H1 (cell line): ENCODE measurements at regions of chr10 and their contacts with region 1.

Region 1: GRCh38 chr10:131885391-131886161 is 15.2 kb upstream of the PPP2R2D start:
- DNase-seq: peak; percentile 51 to 94
- H3K4me3 ChIP-seq: no peak overlapping the region
- H3K27ac ChIP-seq: no peak overlapping the region
- H3K4me1 ChIP-seq: no peaks in the 10 kb centered on the region
- H3K27me3 ChIP-seq: 0 out of 7 replicates have a peak, but pooled peaks cover 0 to 2% (median 0%) of the 10 kb centered on the region in 4 experiments
- CTCF ChIP-seq: peak; percentile 94 to 98 (median 98)
- EP300 ChIP-seq: no peak
- POLR2A ChIP-seq: no peak
- RAD21 ChIP-seq: peak; percentile 79 to 87

Region 2: DNA sequence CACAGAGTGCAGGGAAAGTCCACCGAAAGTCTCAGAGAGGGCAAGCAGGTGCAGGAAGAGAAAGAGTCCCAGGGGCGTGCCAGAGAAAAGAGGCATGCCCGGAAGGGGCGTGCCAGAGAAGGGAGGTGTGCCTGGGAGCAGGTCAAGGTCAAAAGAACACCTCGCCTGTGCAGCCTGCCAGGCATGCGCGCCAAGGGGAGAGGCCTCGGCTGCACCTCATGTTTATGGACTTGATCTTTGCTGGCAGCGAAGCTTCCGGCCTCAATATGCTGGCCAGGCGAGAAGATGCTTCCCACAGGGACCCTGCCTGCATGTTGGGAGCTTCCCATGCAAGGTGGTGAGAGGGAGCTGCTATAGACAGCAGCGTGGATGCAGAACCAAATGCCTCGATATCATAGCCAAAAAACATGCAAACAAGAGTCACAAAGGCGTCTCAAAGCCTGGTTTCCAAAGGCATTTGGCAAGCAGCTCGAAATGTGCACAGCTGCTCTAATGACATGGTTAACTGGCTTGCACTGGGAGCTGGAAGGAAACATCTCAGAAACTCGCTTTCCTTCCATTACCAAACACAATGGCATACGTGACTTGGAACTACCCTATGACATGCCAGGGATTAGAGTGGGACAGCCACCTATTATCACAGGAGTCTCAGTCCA is 177.2 kb before region 1 on chr10:
- CTCF ChIA-PET with region 1: no interaction called
- POLR2A ChIA-PET with region 1: no interaction called
- DNase-seq: no peak
- H3K4me3 ChIP-seq: no peak overlapping the region
- H3K27ac ChIP-seq: no peak overlapping the region
- H3K4me1 ChIP-seq: no peaks in the 10 kb centered on the region; a peak in 1 of 7 replicates
- H3K27me3 ChIP-seq: no peaks in the 10 kb centered on the region
- CTCF ChIP-seq: no peak
- EP300 ChIP-seq: no peak
- POLR2A ChIP-seq: no peak
- RAD21 ChIP-seq: no peak

Region 3: GRCh38 chr10:131900350-131901146 is 15.0 kb after region 1 on chr10 and contains the start of gene PPP2R2D:
- CTCF ChIA-PET with region 1: interaction called, 12 read pairs
- POLR2A ChIA-PET with region 1: interaction called, 4 read pairs
- DNase-seq: peak; percentile 76 to 96
- H3K4me3 ChIP-seq: peak within 1 kb of the TSS; percentile 72 to 88 (median 82)
- H3K27ac ChIP-seq: peak within 1 kb of the TSS; percentile 91
- H3K4me1 ChIP-seq: peaks cover 0 to 4% (median 2%) of the 10 kb centered on the region in 4 experiments; a peak in 4 of 7 replicates
- H3K27me3 ChIP-seq: peaks cover 0 to 2% (median 0%) of the 10 kb centered on the region in 4 experiments; a peak in 3 of 7 replicates
- CTCF ChIP-seq: no peak
- EP300 ChIP-seq: 0 out of 3 replicates have a peak, but pooled peaks of 1 of the 2 experiments have one; percentile 10
- POLR2A ChIP-seq: peak; percentile 77 to 93
- RAD21 ChIP-seq: no peak
- total RNA-seq, gene PPP2R2D: 32.8 and 34.1 TPM in 2 replicates